Heart left ventricle (tissue), 16 donors: ENCODE measurements at regions of chr12 and their contacts with region 1.

Region 1: GRCh38 chr12:92145731-92146496 is at the start of gene BTG1:
- DNase-seq: peak; percentile 98 to 99 (median 99)
- ATAC-seq: peak; percentile 89 to 93 (median 90)
- H3K4me3 ChIP-seq: peak within 1 kb of the TSS; percentile 76 to 96 (median 92)
- H3K27ac ChIP-seq: peak within 1 kb of the TSS; percentile 92 to 100 (median 98)
- H3K4me1 ChIP-seq: peaks cover 0 to 35% (median 4%) of the 10 kb centered on the region in 12 donors
- H3K27me3 ChIP-seq: no peaks in the 10 kb centered on the region
- CTCF ChIP-seq: peak in 1 of 12 donors; percentile 7
- POLR2A ChIP-seq: peak; percentile 95 to 99
- total RNA-seq, gene BTG1: 20.5 to 120 (median 58.3) TPM

Region 2: DNA sequence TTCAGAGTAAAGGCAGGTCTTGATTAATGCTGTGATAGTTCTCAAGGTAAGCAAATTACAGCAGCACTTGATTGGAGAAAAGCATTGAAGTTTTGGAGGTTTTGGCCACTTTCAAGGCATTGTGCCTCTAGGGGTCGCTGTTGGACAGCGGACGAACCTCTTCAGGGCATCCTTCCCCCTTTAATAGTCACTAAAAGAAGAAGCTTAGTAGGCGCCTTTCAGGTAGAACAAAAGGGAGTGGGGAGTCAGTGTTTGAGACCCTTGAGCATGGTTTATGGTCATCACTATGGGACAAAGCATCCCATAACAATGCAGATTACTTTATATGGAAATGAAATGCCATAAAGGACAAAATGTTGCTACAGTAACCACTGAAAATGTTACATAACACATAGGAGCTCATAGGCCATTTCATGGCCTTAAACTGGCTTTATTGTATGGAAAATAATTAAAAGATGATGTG is 763.8 kb before region 1 on chr12:
- intact Hi-C with region 1: loop called in 9 of 10 experiments (anchors 1 to 5 kb)
- DNase-seq: peak; percentile 75 to 89 (median 84)
- ATAC-seq: peak; percentile 80 to 88 (median 84)
- H3K4me3 ChIP-seq: peak overlapping the region; percentile 4 to 61 (median 50)
- H3K27ac ChIP-seq: peak overlapping the region; percentile 37 to 86 (median 73)
- H3K4me1 ChIP-seq: peaks cover 0 to 6% (median 0%) of the 10 kb centered on the region in 12 donors
- H3K27me3 ChIP-seq: no peaks in the 10 kb centered on the region
- CTCF ChIP-seq: peak; percentile 81 to 97 (median 90)
- POLR2A ChIP-seq: no peak

Region 3: DNA sequence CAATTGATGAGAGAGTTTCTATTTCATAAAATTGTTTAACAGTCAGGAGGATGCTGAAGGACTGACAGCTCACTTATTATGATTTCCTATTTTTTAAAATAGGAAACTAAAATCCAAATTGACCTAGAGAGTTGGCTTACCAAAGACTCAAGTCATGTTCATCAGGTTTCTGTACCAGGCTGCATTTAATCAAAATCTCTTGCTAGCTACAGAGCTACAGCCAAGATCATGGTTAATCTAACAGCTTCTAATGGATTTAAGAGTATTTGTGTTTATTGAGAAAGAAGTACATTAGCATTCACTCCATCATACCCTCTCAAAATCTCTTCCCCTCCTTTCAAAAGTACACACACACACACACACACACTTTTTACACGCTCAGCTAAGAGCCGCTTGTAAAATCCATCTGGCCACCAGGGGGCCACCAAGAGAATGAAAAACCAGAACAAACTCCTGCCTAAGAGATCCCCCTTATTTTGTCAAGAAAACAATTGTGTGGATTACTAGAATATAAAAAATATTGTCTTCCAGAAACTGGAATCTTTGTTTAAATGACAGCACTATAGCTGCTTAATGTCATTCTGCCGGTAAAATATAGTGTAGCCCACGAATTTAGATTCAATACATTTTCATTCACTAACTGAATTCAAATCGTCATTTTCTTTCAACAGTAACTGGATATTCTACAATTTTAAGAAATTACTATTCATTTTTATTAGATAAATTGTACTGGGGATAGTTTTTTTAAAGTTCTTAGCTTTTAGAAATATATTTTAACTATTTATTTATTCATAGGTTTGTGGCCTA is 334.2 kb before region 1 on chr12:
- intact Hi-C with region 1: loop called (anchors 1 to 5 kb)
- DNase-seq: peak; percentile 56 to 77 (median 67)
- ATAC-seq: peak in 3 of 4 donors; percentile 61 to 76 (median 68)
- H3K4me3 ChIP-seq: no peak overlapping the region
- H3K27ac ChIP-seq: no peak overlapping the region
- H3K4me1 ChIP-seq: no peaks in the 10 kb centered on the region
- H3K27me3 ChIP-seq: no peaks in the 10 kb centered on the region
- CTCF ChIP-seq: peak; percentile 72 to 90 (median 82)
- POLR2A ChIP-seq: no peak

Region 4: DNA sequence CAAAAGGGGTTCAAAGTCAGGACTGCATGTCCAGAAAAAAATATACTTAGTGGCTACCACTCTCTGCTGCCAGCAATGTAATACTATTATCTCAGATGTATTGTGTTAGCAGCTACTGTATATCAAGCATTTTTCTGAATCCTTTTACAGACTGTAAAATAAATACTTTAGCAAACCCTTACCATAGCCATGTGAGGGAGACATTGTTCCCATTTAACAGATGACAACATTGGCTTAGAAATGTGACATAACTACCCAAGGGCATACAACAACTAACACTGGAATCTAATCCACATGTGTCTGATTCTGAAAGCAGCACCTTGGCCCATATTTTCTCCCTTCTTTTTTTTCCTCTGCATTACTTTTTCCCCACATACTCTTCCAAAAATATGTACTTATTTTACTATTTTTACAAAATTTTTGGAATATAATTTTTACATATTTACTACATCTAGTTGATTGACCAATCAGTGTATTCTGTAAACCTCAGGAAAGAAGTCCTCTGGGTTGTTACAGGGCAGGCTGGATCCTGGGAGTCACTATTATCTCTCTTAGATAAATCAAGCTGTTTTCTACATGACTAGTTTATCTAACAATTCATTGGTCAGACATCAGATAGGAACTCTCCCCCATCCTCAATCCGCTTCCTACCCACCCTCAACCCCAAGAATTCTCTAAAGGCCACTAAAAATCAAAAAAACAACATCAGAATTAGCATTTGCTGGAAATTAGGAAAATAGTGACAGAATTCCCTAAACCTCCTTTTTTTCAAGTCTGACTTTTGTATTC is 154.3 kb before region 1 on chr12:
- intact Hi-C with region 1: loop called in 4 of 10 experiments (anchors 5 to 10 kb)
- DNase-seq: no peak
- ATAC-seq: no peak
- H3K4me3 ChIP-seq: no peak overlapping the region
- H3K27ac ChIP-seq: peak overlapping the region in 3 of 12 donors; percentile 0 to 39 (median 0)
- H3K4me1 ChIP-seq: peaks cover 0 to 37% (median 12%) of the 10 kb centered on the region in 12 donors
- H3K27me3 ChIP-seq: no peaks in the 10 kb centered on the region
- CTCF ChIP-seq: no peak
- POLR2A ChIP-seq: no peak

Region 5: DNA sequence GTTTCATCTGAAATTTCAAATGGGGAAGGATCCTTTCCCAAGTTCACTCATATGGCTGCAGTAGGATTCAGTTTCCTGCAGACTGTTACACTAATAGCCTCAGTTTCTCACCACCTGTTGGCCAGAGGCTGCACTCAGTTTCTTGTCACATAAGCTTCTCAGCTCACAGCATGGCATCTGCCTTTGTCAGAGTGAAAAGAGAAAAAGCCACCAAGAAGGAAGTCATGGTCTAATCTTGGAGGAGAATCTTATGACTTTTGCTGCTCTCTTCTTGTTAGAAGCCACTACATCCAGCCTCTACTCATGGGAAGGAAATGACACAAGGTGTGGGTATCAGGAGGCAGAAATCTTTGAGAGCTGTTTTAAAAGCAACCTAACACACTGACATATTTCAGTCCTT is 39.1 kb after region 1 on chr12:
- intact Hi-C with region 1: no loop called
- DNase-seq: no peak
- ATAC-seq: no peak
- H3K4me3 ChIP-seq: no peak overlapping the region
- H3K27ac ChIP-seq: peak overlapping the region in 1 of 12 donors; percentile 12
- H3K4me1 ChIP-seq: no peaks in the 10 kb centered on the region
- H3K27me3 ChIP-seq: no peaks in the 10 kb centered on the region
- CTCF ChIP-seq: no peak
- POLR2A ChIP-seq: no peak

Region 6: DNA sequence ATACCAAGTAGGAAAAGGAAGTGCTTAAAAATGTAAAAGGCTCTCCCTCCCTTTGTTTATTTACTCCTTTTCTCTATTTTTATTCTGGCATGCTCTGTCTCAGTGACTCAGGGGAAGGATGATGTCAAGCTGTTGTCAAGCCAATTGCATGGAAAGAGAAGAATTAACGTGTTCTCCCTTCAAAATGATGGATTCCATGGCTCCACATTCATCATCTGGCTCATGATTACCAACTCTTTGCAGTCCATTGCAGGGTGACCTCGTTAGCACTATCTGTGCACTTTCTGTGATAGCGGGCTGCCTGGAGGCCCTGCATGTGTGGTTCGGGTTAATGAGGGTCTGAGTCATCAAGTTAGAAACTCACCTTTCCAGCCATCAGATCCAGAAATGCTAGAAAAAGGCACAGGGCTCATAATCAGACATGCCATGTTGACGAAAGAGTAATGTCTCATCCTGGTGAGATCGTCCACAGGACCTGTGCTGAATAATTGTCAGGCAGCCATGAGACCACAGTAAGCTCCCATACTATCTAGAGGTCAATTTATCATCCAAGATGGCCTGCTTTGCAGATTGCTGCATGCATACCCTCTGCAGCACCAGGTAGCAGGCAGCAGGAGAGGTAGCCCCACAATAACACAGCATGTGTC is 78.9 kb after region 1 on chr12:
- intact Hi-C with region 1: loop called in 1 of 10 experiments (anchors 5 kb)
- DNase-seq: no peak
- ATAC-seq: peak in 2 of 4 donors; percentile 44 to 46
- H3K4me3 ChIP-seq: no peak overlapping the region
- H3K27ac ChIP-seq: peak overlapping the region in 3 of 12 donors; percentile 13 to 41 (median 32)
- H3K4me1 ChIP-seq: peaks cover 0 to 8% (median 0%) of the 10 kb centered on the region in 12 donors
- H3K27me3 ChIP-seq: no peaks in the 10 kb centered on the region
- CTCF ChIP-seq: no peak
- POLR2A ChIP-seq: no peak

Region 7: DNA sequence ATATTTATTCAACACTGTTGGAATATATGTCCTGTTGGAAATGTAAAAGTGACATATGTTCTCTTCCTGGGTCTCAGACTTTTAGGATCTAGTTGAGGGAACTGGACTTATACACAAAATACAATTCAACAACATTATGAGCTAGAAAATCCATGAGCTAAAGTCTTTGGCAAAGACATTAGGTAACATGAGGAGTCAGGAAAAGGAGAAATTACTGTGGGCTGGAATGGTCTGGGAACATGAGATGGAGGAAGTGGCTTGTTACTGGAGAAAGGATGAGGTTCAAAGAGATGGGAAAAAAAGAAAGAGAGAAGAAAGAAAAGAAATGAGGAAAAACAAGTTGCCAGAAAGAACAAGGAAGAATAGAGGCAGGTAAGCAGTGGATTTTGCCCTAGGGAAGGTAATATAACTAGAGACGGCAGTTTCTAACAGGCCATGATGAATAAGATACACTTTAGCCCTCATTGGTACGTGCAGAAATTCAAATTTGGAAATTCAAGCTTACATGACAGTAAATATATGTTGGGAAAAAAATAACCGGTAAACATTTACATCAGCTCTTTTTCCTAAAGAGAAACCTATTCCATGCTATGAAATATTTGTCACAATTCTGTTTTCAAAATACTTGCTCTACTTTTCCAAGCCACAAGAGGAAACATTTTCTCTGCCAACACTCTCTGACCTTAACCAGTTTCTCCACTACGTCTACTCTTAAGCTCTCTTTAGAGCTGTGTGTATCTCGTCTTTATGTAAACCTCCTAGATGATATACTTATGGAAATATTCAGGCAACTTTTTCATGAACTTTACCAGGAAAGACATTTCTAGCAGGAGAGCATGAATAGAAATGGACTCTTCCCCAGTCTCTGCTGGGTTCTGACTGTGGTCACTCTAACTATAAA is 268.5 kb after region 1 on chr12:
- intact Hi-C with region 1: loop called in 4 of 10 experiments (anchors 10 kb)
- DNase-seq: no peak
- ATAC-seq: no peak
- H3K4me3 ChIP-seq: no peak overlapping the region
- H3K27ac ChIP-seq: peak overlapping the region in 3 of 12 donors; percentile 1 to 14 (median 8)
- H3K4me1 ChIP-seq: peaks cover 0 to 40% (median 12%) of the 10 kb centered on the region in 12 donors
- H3K27me3 ChIP-seq: no peaks in the 10 kb centered on the region
- CTCF ChIP-seq: peak in 1 of 12 donors; percentile 12
- POLR2A ChIP-seq: no peak

Region 8: DNA sequence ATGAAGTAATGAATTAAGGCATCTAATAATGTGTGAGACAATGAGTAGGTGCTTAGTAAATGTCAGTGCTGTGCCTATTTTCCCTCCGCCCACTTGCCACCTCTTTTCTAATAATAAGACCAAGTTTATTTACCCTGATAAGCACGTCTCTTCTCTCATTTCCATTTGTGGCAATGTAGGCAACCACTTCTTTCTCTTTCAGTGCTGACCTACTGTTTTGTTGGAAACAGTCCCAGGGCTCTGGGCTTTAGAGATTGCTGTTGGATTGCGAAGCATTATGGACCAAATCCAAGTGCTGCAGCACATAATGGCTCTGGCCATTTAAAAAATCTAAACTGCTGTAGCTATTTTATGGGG is 415.6 kb after region 1 on chr12:
- intact Hi-C with region 1: loop called in 4 of 10 experiments (anchors 5 kb)
- DNase-seq: peak in 4 of 5 donors; percentile 50 to 73 (median 62)
- ATAC-seq: peak; percentile 86 to 93 (median 90)
- H3K4me3 ChIP-seq: no peak overlapping the region
- H3K27ac ChIP-seq: peak overlapping the region in 11 of 12 donors; percentile 36 to 77 (median 54)
- H3K4me1 ChIP-seq: peaks cover 5 to 37% (median 18%) of the 10 kb centered on the region in 12 donors
- H3K27me3 ChIP-seq: no peaks in the 10 kb centered on the region
- CTCF ChIP-seq: no peak
- POLR2A ChIP-seq: no peak